ENCODE measurements at regions of chr7 and their contacts with region 1.

Region 1: DNA sequence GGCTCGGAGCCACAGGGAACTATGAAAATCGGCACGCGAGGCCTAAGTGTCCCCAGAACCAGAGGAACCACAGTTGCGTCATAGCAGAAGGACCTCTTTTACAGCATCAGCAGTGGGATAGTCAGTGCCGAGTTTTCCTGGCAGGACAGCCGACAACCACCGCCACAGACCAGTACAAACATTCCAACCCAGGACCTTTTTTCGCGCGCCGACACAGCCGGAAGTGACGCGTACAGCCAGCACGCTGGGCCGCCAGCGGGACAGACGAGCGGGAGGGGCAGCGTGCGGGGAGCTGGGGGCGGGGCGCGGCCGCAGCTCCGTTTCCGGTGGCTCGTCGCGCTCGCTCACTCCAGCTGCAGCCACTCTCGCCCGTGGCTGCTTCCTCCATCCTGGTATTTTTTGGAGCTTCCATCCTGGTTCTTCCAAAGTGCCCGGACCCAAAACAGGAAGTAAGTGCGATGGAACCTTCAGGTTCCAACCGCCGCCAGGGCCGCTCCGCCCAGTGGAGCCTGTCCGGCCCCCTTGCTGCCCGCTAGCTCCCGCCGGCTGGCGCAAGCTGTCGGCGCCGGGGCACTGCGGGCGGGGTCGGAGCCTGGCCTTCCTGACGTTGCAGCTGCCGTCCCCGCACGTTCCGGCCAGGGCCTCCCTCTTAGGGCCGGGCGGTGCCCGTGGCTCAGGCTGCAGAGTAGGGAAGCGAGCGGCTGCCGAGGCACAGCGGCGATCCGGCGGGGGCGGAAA is at the start of gene DMTF1:
- DNase-seq: peak; percentile 78 to 89
- H3K4me3 ChIP-seq: peak within 1 kb of the TSS; percentile 72 to 99 (median 82)
- H3K27ac ChIP-seq: peak within 1 kb of the TSS; percentile 99
- H3K4me1 ChIP-seq: peaks cover 0 to 3% (median 0%) of the 10 kb centered on the region in 4 experiments; a peak in 2 of 7 replicates
- H3K27me3 ChIP-seq: no peaks in the 10 kb centered on the region
- CTCF ChIP-seq: no peak
- EP300 ChIP-seq: peak in 1 of 2 experiments; percentile 67; a peak in 1 of 3 replicates
- POLR2A ChIP-seq: peak; percentile 87 to 94
- RAD21 ChIP-seq: no peak
- total RNA-seq, gene DMTF1: 76.9 and 86.0 TPM in 2 replicates

Region 2: DNA sequence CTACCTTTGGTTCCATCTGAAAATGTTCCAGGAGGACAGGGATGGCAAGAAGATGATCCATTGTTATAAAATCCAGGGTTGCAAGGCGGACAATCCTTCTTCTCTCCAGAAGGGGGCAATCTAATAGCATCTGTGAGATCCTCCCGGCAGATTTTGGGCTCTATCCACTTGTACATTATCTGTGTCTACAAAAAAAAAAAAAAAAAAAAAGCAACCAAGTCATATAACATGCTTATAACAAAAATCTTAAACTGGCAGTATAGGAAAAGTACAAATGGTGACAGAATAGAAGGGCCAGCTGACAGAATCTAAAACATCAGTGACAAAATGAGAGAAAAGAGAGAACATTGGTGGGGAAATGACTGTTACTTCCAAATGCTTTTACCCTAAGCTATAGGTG is 225.5 kb before region 1 on chr7:
- CTCF ChIA-PET with region 1: interaction called, 86 read pairs
- POLR2A ChIA-PET with region 1: interaction called, 10 read pairs
- DNase-seq: no peak
- H3K4me3 ChIP-seq: no peak overlapping the region
- H3K27ac ChIP-seq: no peak overlapping the region
- H3K4me1 ChIP-seq: no peaks in the 10 kb centered on the region
- H3K27me3 ChIP-seq: no peaks in the 10 kb centered on the region; a peak in 1 of 7 replicates
- CTCF ChIP-seq: peak; percentile 10 to 72 (median 62)
- EP300 ChIP-seq: no peak
- POLR2A ChIP-seq: no peak
- RAD21 ChIP-seq: peak; percentile 75 to 77

Region 3: GRCh38 chr7:86942081-86942480 is 210.2 kb before region 1 on chr7:
- CTCF ChIA-PET with region 1: interaction called, 44 read pairs
- POLR2A ChIA-PET with region 1: interaction called, 7 read pairs
- DNase-seq: no peak
- H3K4me3 ChIP-seq: no peak overlapping the region
- H3K27ac ChIP-seq: no peak overlapping the region
- H3K4me1 ChIP-seq: 0 out of 7 replicates have a peak, but pooled peaks cover 0 to 2% (median 0%) of the 10 kb centered on the region in 4 experiments
- H3K27me3 ChIP-seq: no peaks in the 10 kb centered on the region
- CTCF ChIP-seq: no peak
- EP300 ChIP-seq: no peak
- POLR2A ChIP-seq: no peak
- RAD21 ChIP-seq: no peak

Region 4: DNA sequence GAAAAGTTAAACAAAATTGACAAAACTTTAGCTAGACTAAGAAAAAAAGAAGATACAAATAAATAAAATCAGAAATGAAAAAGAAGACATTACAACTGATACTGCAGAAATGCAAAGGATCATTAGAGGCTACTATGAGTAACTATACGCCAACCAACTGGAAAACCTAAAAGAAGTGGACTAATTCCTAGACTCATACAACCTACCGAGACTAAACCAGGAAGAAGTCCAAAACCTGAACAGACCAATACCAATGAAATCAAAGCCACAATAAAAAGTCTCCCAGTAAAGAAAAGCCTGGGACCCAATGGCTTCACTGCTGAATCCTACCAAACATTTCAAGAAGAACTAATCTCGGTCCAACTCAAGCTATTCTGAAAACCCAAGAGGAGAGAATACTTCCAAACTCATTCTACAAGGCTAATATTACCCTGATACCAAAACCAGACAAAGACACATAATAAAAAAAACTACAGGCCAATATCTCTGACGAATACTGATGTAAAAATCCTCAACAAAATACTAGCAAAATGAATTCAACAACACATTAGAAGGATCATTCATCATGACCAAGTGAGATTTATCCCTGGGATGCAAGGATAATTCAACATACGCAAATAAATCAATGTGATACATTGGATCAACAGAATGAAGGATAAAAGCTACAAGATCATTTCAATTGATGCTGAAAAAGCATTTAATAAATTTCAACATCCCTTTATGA is 113.1 kb before region 1 on chr7:
- CTCF ChIA-PET with region 1: interaction called, 5 read pairs
- POLR2A ChIA-PET with region 1: interaction called, 28 read pairs
- DNase-seq: no peak
- H3K4me3 ChIP-seq: peak overlapping the region; percentile 55 to 98 (median 76)
- H3K27ac ChIP-seq: peak overlapping the region; percentile 79
- H3K4me1 ChIP-seq: 0 out of 7 replicates have a peak, but pooled peaks cover 0 to 2% (median 0%) of the 10 kb centered on the region in 4 experiments
- H3K27me3 ChIP-seq: no peaks in the 10 kb centered on the region
- CTCF ChIP-seq: no peak
- EP300 ChIP-seq: no peak
- POLR2A ChIP-seq: no peak
- RAD21 ChIP-seq: no peak

Region 5: DNA sequence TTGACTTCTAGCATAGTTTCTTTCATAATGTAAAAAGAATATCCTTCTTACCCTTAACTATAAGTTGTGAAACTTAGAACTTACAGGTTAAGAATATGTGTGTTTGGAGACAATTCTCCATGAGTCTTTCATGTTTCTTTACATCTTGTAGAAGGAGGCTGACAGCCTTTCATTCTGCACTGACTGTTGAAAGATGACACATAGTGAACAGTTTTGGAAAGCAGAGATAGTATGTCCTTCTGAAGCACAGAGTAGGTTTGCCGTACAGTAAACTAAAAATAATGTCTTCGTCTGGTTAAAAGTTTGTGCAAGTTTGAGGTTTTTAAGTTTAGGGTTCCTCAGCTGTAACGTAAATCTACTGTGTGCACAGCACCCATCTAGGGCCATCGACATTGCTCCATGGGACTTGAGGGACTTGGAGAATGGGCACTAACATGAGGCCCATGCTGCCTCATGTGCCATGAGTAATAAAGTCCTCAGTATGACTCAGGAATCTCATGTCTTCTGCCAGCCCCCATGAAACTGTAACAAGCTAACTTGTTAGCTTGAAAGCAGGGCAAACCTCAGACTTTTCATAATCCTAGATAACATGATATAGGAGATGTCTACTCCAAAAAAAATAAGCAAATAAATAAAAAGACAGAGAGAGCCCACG is 68.3 kb before region 1 on chr7:
- CTCF ChIA-PET with region 1: no interaction called
- POLR2A ChIA-PET with region 1: no interaction called
- DNase-seq: no peak
- H3K4me3 ChIP-seq: no peak overlapping the region
- H3K27ac ChIP-seq: no peak overlapping the region
- H3K4me1 ChIP-seq: no peaks in the 10 kb centered on the region
- H3K27me3 ChIP-seq: no peaks in the 10 kb centered on the region
- CTCF ChIP-seq: no peak
- EP300 ChIP-seq: no peak
- POLR2A ChIP-seq: no peak
- RAD21 ChIP-seq: no peak

Region 6: GRCh38 chr7:87129848-87130247 is 22.4 kb before region 1 on chr7:
- CTCF ChIA-PET with region 1: interaction called, 58 read pairs
- POLR2A ChIA-PET with region 1: interaction called, 13 read pairs
- DNase-seq: no peak
- H3K4me3 ChIP-seq: peak overlapping the region in 1 of 4 experiments; percentile 38; a peak in 1 of 8 replicates
- H3K27ac ChIP-seq: no peak overlapping the region
- H3K4me1 ChIP-seq: peaks cover 1 to 14% (median 9%) of the 10 kb centered on the region in 4 experiments; a peak in 6 of 7 replicates
- H3K27me3 ChIP-seq: no peaks in the 10 kb centered on the region
- CTCF ChIP-seq: no peak
- EP300 ChIP-seq: no peak
- POLR2A ChIP-seq: no peak
- RAD21 ChIP-seq: no peak

Region 7: GRCh38 chr7:87219545-87220025 is 67.3 kb after region 1 on chr7 and contains the start of gene TMEM243:
- CTCF ChIA-PET with region 1: no interaction called
- POLR2A ChIA-PET with region 1: interaction called, 40 read pairs
- DNase-seq: peak in 1 of 2 experiments; percentile 73
- H3K4me3 ChIP-seq: peak within 1 kb of the TSS; percentile 80 to 98 (median 92)
- H3K27ac ChIP-seq: peak within 1 kb of the TSS; percentile 60; the same call in 1 of the 2 replicates
- H3K4me1 ChIP-seq: peaks cover 0 to 7% (median under 1%) of the 10 kb centered on the region in 4 experiments; a peak in 4 of 7 replicates
- H3K27me3 ChIP-seq: peaks cover 0 to 18% (median 15%) of the 10 kb centered on the region in 4 experiments; a peak in 5 of 7 replicates
- CTCF ChIP-seq: peak in 1 of 3 experiments; percentile 9; a peak in 1 of 4 replicates
- EP300 ChIP-seq: no peak
- POLR2A ChIP-seq: peak in 1 of 2 experiments; percentile 46; a peak in 1 of 3 replicates
- RAD21 ChIP-seq: no peak
- total RNA-seq, gene TMEM243: 26.0 and 27.6 TPM in 2 replicates